HepG2 (cell line): ENCODE measurements at regions of chr17 and their contacts with region 1.

Region 1: GRCh38 chr17:66900126-66901010 is 64.1 kb upstream of the CACNG4 start:
- DNase-seq: peak; percentile 33
- ATAC-seq: peak; percentile 51; the same call in 2 of the 3 replicates
- H3K4me3 ChIP-seq: no peak overlapping the region
- H3K27ac ChIP-seq: no peak overlapping the region
- H3K4me1 ChIP-seq: peaks cover 8% of the 10 kb centered on the region
- H3K27me3 ChIP-seq: peaks cover 7 to 28% of the 10 kb centered on the region in 2 experiments; a peak in 4 of 5 replicates
- CTCF ChIP-seq: peak; percentile 45
- EP300 ChIP-seq: no peak
- POLR2A ChIP-seq: no peak
- RAD21 ChIP-seq: no peak

Region 2: GRCh38 chr17:66715745-66716156 is 184.6 kb before region 1 on chr17:
- CTCF ChIA-PET with region 1: interaction called, 36 read pairs
- POLR2A ChIA-PET with region 1: no interaction called
- in situ Hi-C with region 1: loop called (anchors 5 kb)
- intact Hi-C with region 1: loop called (anchors 1 kb)
- DNase-seq: peak; percentile 69
- ATAC-seq: peak; percentile 72
- H3K4me3 ChIP-seq: no peak overlapping the region
- H3K27ac ChIP-seq: no peak overlapping the region
- H3K4me1 ChIP-seq: peaks cover 36% of the 10 kb centered on the region
- H3K27me3 ChIP-seq: no peaks in the 10 kb centered on the region
- CTCF ChIP-seq: peak; percentile 87
- EP300 ChIP-seq: no peak
- POLR2A ChIP-seq: no peak
- RAD21 ChIP-seq: peak; percentile 60; the same call in 1 of the 2 replicates

Region 3: GRCh38 chr17:66951935-66952662 is 51.7 kb after region 1 on chr17:
- CTCF ChIA-PET with region 1: no interaction called
- POLR2A ChIA-PET with region 1: no interaction called
- in situ Hi-C with region 1: no loop called
- intact Hi-C with region 1: no loop called
- DNase-seq: peak; percentile 93
- ATAC-seq: peak; percentile 86
- H3K4me3 ChIP-seq: no peak overlapping the region
- H3K27ac ChIP-seq: peak overlapping the region; percentile 5
- H3K4me1 ChIP-seq: peaks cover 24% of the 10 kb centered on the region
- H3K27me3 ChIP-seq: peaks cover 0 to 25% of the 10 kb centered on the region in 2 experiments; a peak in 4 of 5 replicates
- CTCF ChIP-seq: no peak
- EP300 ChIP-seq: peak; percentile 32 to 53; a peak in 2 of 4 replicates
- POLR2A ChIP-seq: no peak
- RAD21 ChIP-seq: no peak

Region 4: GRCh38 chr17:66985338-66986237 is 85.2 kb after region 1 on chr17:
- CTCF ChIA-PET with region 1: no interaction called
- POLR2A ChIA-PET with region 1: no interaction called
- in situ Hi-C with region 1: no loop called
- intact Hi-C with region 1: no loop called
- DNase-seq: no peak
- ATAC-seq: no peak
- H3K4me3 ChIP-seq: no peak overlapping the region
- H3K27ac ChIP-seq: no peak overlapping the region
- H3K4me1 ChIP-seq: no peaks in the 10 kb centered on the region
- H3K27me3 ChIP-seq: peaks cover 7 to 72% of the 10 kb centered on the region in 2 experiments
- CTCF ChIP-seq: no peak
- EP300 ChIP-seq: no peak
- POLR2A ChIP-seq: no peak
- RAD21 ChIP-seq: no peak

Region 5: GRCh38 chr17:67107811-67108775 is 207.7 kb after region 1 on chr17:
- CTCF ChIA-PET with region 1: no interaction called
- POLR2A ChIA-PET with region 1: no interaction called
- in situ Hi-C with region 1: no loop called
- intact Hi-C with region 1: no loop called
- DNase-seq: no peak
- ATAC-seq: no peak
- H3K4me3 ChIP-seq: no peak overlapping the region
- H3K27ac ChIP-seq: no peak overlapping the region
- H3K4me1 ChIP-seq: no peaks in the 10 kb centered on the region; the same call in 1 of the 2 replicates
- H3K27me3 ChIP-seq: no peaks in the 10 kb centered on the region
- CTCF ChIP-seq: no peak
- EP300 ChIP-seq: no peak
- POLR2A ChIP-seq: no peak
- RAD21 ChIP-seq: no peak